Transverse colon (tissue), 4 donors: ENCODE measurements at regions of chr15 and their contacts with region 1.

Region 1: GRCh38 chr15:45402162-45402954 is 24.0 kb upstream of the GATM start:
- DNase-seq: peak; percentile 96
- H3K4me3 ChIP-seq: peak overlapping the region; percentile 79 to 90 (median 84)
- H3K27ac ChIP-seq: peak overlapping the region; percentile 95 to 98 (median 96)
- H3K4me1 ChIP-seq: peaks cover 7 to 33% (median 22%) of the 10 kb centered on the region in 4 donors
- H3K27me3 ChIP-seq: no peaks in the 10 kb centered on the region
- CTCF ChIP-seq: peak in 1 of 5 experiments; percentile 33
- EP300 ChIP-seq: no peak
- POLR2A ChIP-seq: peak; percentile 81

Region 2: DNA sequence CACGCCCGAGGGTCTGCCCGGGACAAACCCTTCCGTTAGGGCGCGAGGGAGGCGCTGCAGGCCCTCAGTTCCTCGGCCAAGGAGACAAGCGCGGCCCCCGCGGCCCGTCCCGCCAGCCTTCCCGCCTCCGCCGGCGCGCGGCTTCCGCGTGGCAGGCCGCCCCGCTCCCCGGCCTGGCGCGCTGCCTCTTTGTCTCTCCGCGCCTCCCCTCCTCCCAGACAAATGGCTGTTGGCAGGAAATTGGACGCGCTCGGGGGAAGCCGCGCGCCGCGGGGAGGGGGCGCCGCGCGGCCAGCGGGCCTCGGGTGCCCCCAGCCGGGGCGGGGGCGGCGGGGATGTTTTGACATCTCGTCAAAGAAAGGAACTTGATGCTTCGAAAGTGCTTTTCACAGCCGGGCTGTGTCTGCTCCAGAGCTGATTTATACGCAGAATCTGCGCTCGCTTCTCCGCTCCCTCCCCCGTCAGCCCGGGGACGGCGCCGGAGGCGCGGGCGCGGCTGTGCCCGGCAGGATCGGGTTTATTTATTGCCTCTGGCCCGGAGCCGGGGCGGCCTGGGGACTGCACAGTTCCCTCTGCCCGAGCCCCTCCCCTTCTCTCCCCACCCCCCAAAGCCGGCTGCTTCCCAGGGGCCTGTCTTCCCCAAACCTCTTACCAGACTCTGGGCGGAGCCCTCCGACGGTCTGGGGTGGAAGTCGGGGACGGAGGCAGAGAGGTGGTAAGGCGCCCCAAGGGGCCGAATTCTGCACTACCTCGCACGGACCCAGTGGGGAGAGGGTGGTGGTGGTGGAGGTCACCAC is 235.3 kb before region 1 on chr15:
- in situ Hi-C with region 1: loop called in 1 of 4 experiments (anchors 25 kb)
- intact Hi-C with region 1: loop called (anchors 10 kb)
- DNase-seq: peak; percentile 89
- H3K4me3 ChIP-seq: peak overlapping the region; percentile 47 to 78 (median 58)
- H3K27ac ChIP-seq: peak overlapping the region; percentile 94 to 99 (median 96)
- H3K4me1 ChIP-seq: peaks cover 10 to 21% (median 12%) of the 10 kb centered on the region in 4 donors
- H3K27me3 ChIP-seq: no peaks in the 10 kb centered on the region
- CTCF ChIP-seq: peak; percentile 68 to 89 (median 74)
- EP300 ChIP-seq: no peak
- POLR2A ChIP-seq: peak; percentile 67

Region 3: GRCh38 chr15:45198337-45199135 is 203.8 kb before region 1 on chr15:
- in situ Hi-C with region 1: loop called (anchors 10 to 25 kb)
- intact Hi-C with region 1: no loop called
- DNase-seq: peak; percentile 97
- H3K4me3 ChIP-seq: peak overlapping the region; percentile 17 to 55 (median 54)
- H3K27ac ChIP-seq: peak overlapping the region; percentile 96 to 99 (median 98)
- H3K4me1 ChIP-seq: peaks cover 0 to 9% (median 0%) of the 10 kb centered on the region in 4 donors
- H3K27me3 ChIP-seq: no peaks in the 10 kb centered on the region
- CTCF ChIP-seq: peak; percentile 51 to 86 (median 70)
- EP300 ChIP-seq: no peak
- POLR2A ChIP-seq: peak; percentile 96

Region 4: DNA sequence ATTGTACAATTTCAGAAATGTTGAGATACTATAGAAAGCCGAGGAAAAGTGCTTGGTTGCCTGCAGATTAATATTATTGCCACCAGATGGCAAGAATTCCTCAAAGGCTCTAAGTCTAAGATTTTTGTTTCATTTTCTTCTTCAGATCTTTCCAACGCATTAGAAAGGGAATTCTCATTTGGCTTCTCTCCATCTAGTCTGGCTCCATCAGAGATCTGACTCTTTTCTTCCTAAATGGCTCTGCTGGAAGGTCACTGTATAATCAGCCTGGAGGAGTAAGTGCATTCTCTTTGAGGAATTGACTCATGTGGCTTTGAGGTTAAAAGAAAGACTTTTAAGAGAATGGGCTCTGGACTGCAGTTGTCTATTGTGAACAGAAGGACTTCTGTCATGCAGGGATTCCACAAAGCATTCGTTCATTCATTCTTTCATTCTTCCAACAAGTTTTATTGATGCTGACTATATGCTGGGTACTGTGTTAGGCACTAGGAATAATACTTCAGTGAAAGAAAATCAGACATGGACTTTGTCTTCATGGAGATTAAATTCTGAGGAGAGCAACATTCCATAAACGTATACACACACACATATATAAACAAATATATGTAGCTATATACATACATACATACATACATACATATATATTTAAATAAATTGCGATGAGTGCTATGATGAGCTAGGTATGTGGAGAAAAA is 95.0 kb before region 1 on chr15:
- in situ Hi-C with region 1: loop called (anchors 10 kb)
- intact Hi-C with region 1: loop called (anchors 10 kb)
- DNase-seq: no peak
- H3K4me3 ChIP-seq: peak overlapping the region in 1 of 4 donors; percentile 31
- H3K27ac ChIP-seq: peak overlapping the region in 1 of 4 donors; percentile 41
- H3K4me1 ChIP-seq: peaks cover 0 to 10% (median 3%) of the 10 kb centered on the region in 4 donors
- H3K27me3 ChIP-seq: no peaks in the 10 kb centered on the region
- CTCF ChIP-seq: peak; percentile 44 to 71 (median 62)
- EP300 ChIP-seq: no peak
- POLR2A ChIP-seq: no peak

Region 5: DNA sequence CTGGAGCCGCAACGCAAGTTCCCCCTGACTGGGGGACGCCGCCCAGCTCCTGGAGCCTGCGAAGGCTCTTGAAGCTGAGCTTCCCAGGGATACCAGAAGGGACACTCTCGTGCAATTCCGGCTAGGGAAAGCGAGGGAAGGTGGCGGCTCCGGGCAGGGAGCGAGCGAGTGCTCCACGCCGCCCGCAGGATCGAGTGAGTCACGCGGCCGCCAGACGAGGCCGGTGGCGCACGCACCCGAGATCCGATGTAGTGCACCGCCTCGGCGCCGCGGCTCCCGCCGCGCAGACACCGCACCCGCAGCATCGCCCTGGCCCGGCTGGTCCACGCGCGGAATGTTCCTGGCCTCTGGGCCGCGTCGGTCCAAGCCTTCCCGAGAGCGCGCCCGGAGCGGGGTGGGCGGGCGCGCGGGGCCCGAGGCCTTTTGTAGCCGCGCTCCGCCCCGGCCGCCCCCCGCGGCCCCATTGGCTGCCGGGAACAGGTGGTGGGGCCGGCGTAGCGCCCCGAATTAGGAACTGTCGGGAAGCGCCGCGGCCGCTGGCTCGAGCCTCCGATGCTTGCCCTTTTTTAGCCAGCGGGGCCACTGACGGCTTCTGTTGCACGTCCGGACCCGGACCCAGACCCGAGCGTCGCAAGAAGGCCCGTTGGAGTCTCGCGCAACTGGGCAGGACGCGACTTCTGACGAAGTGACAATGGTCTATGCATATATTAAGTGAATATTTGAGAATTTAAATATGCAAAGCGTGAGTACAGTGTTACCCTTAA is 24.0 kb before region 1 on chr15 and contains the start of gene GATM:
- in situ Hi-C with region 1: no loop called
- intact Hi-C with region 1: loop called (anchors 2 kb)
- DNase-seq: peak; percentile 79
- H3K4me3 ChIP-seq: peak within 1 kb of the TSS; percentile 51 to 73 (median 60)
- H3K27ac ChIP-seq: peak within 1 kb of the TSS; percentile 83 to 92 (median 84)
- H3K4me1 ChIP-seq: peaks cover 0 to 28% (median 13%) of the 10 kb centered on the region in 4 donors
- H3K27me3 ChIP-seq: no peaks in the 10 kb centered on the region
- CTCF ChIP-seq: peak; percentile 33 to 66 (median 52)
- EP300 ChIP-seq: no peak
- POLR2A ChIP-seq: peak; percentile 43
- total RNA-seq, gene GATM: 15.9 to 96.9 (median 18.6) TPM